GM23248 (cell line): ENCODE measurements at regions of chr22 and their contacts with region 1.

Region 1: GRCh38 chr22:38569972-38570778 is at the start of gene DMC1:
- DNase-seq: peak; percentile 90
- H3K4me3 ChIP-seq: peak within 1 kb of the TSS; percentile 85
- H3K27ac ChIP-seq: no peak within 1 kb of the TSS
- H3K4me1 ChIP-seq: peaks cover 8% of the 10 kb centered on the region
- H3K27me3 ChIP-seq: no peaks in the 10 kb centered on the region
- total RNA-seq, gene DMC1: 3.7 and 11.8 TPM in 2 replicates

Region 2: GRCh38 chr22:37581504-37581903 is 988.7 kb before region 1 on chr22:
- in situ Hi-C with region 1: no loop called
- DNase-seq: peak; percentile 36
- H3K4me3 ChIP-seq: no peak overlapping the region
- H3K27ac ChIP-seq: no peak overlapping the region
- H3K4me1 ChIP-seq: no peaks in the 10 kb centered on the region
- H3K27me3 ChIP-seq: no peaks in the 10 kb centered on the region

Region 3: GRCh38 chr22:38051900-38052862 is 518.0 kb before region 1 on chr22:
- in situ Hi-C with region 1: loop called (anchors 10 kb)
- DNase-seq: peak; percentile 78
- H3K4me3 ChIP-seq: no peak overlapping the region
- H3K27ac ChIP-seq: no peak overlapping the region
- H3K4me1 ChIP-seq: no peaks in the 10 kb centered on the region
- H3K27me3 ChIP-seq: peaks cover 5% of the 10 kb centered on the region; the same call in 1 of the 2 replicates

Region 4: GRCh38 chr22:38862375-38863329 is 292.5 kb after region 1 on chr22:
- in situ Hi-C with region 1: no loop called
- DNase-seq: no peak
- H3K4me3 ChIP-seq: no peak overlapping the region
- H3K27ac ChIP-seq: no peak overlapping the region
- H3K4me1 ChIP-seq: 0 out of 2 replicates have a peak, but pooled peaks cover 4% of the 10 kb centered on the region
- H3K27me3 ChIP-seq: no peaks in the 10 kb centered on the region